SK-N-SH (cell line): ENCODE measurements at regions of chr19 and their contacts with region 1.

Region 1: GRCh38 chr19:34096020-34096915 is 76.0 kb upstream of the LSM14A start:
- DNase-seq: peak; percentile 72
- H3K4me3 ChIP-seq: peak overlapping the region; percentile 3 to 12; a peak in 2 of 4 replicates
- H3K27ac ChIP-seq: no peak overlapping the region
- H3K4me1 ChIP-seq: no peaks in the 10 kb centered on the region
- H3K27me3 ChIP-seq: no peaks in the 10 kb centered on the region
- CTCF ChIP-seq: peak; percentile 74
- EP300 ChIP-seq: no peak
- RAD21 ChIP-seq: peak; percentile 91

Region 2: DNA sequence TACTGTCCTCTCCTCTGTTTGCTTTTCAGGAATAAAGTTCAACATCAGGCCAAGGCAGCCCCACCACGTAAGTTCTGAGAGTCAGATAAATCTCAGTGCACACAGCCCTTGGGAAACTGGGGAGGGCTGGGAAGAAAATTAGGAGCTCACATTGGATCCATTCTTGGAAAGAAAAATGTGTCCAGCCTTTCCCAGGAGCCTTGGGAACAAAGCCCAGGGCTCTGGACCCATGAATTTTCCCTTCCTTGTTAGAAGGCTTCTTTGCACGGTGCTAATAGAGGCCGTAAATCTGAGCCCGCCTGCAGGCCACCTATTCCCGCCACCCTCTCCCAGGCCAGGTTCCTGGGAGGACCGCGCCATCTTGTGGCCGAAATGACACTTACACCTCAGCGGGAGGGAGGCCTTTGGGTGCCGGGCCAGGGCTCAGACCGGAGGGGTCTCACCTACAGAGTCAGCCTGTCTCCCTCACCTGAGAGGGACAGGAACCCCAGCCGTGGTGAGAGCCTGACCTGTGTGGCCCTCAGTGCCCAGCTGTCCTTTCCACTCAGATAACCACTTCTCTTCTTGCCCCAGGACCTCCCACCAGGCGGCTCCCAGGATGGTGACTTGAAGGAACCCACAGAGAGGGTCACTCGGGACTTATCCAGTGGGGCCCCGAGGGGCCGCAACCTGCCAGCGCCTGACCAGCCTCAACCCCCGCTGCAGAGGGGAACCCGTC is 324.7 kb before region 1 on chr19:
- CTCF ChIA-PET with region 1: interaction called, 336 read pairs
- POLR2A ChIA-PET with region 1: no interaction called
- DNase-seq: peak; percentile 92
- H3K4me3 ChIP-seq: no peak overlapping the region; a peak in 1 of 4 replicates
- H3K27ac ChIP-seq: no peak overlapping the region
- H3K4me1 ChIP-seq: peaks cover 0 to 32% of the 10 kb centered on the region in 2 experiments; a peak in 1 of 4 replicates
- H3K27me3 ChIP-seq: no peaks in the 10 kb centered on the region
- CTCF ChIP-seq: peak; percentile 79
- EP300 ChIP-seq: no peak
- RAD21 ChIP-seq: peak; percentile 98

Region 3: GRCh38 chr19:33998739-33999345 is 97.4 kb before region 1 on chr19:
- CTCF ChIA-PET with region 1: interaction called, 37 read pairs
- POLR2A ChIA-PET with region 1: no interaction called
- DNase-seq: peak; percentile 33
- H3K4me3 ChIP-seq: no peak overlapping the region
- H3K27ac ChIP-seq: no peak overlapping the region
- H3K4me1 ChIP-seq: no peaks in the 10 kb centered on the region; a peak in 1 of 4 replicates
- H3K27me3 ChIP-seq: no peaks in the 10 kb centered on the region
- CTCF ChIP-seq: peak; percentile 63
- EP300 ChIP-seq: no peak
- RAD21 ChIP-seq: peak; percentile 49

Region 4: DNA sequence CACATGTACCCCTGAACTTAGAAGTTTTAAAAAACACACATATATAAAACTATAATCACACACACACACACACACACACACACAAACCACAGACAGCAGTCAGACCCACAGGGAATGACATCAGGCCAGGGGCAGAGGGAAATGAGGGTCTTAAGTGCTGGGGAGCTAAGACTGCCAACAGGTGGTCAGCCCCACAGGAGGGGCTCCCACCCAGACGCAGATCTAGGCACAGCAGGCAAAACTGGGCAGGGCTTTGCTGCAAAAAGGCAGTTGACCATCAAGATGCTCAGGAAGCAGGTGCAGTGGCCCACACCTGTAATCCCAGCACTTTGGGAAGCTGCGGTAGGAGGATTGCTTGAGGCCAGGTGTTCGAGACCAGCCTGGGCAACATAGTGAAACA is 45.0 kb before region 1 on chr19:
- CTCF ChIA-PET with region 1: interaction called, 10 read pairs
- POLR2A ChIA-PET with region 1: no interaction called
- DNase-seq: no peak
- H3K4me3 ChIP-seq: no peak overlapping the region
- H3K27ac ChIP-seq: no peak overlapping the region
- H3K4me1 ChIP-seq: no peaks in the 10 kb centered on the region
- H3K27me3 ChIP-seq: no peaks in the 10 kb centered on the region
- CTCF ChIP-seq: no peak
- EP300 ChIP-seq: no peak
- RAD21 ChIP-seq: no peak

Region 5: DNA sequence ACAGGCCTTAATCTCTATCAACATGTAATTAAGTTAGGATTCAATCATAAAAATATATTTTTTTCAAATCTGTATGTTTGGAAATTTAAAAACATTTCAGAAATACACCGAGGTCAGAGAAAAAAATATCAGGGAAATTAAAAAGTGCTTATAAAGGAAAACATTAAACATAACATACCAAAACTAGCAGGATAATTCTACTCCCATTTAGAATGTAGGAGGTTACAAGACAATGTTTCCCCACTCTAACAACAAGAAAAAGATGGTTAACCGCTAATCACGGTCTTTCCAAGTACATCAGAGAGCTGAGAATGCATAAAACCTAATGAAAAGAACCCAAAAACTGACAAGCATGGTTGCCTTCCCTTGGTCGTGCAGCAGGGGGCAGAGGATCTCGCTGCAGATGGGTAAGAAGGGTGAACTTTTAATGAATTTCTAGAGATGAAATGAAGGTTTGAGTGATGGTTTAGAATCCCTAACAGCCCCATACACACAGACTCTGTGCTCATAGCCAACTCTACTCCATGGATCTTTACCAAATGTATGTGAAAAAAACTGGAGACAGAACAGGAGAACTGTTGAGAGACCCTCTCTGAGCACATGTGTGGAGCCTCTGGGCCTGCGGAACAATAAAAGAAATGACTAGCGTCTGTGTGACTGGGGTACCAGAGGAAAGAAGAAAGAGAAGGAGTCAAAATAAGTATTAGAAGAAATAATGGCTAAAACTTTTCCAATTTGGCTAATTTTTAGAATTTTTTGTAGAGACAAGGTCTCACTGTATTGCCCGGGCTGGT is 24.8 kb after region 1 on chr19:
- CTCF ChIA-PET with region 1: interaction called, 18 read pairs
- POLR2A ChIA-PET with region 1: no interaction called
- DNase-seq: peak; percentile 65
- H3K4me3 ChIP-seq: no peak overlapping the region; a peak in 1 of 4 replicates
- H3K27ac ChIP-seq: no peak overlapping the region
- H3K4me1 ChIP-seq: no peaks in the 10 kb centered on the region
- H3K27me3 ChIP-seq: no peaks in the 10 kb centered on the region; the same call in 1 of the 2 replicates
- CTCF ChIP-seq: peak; percentile 70
- EP300 ChIP-seq: no peak
- RAD21 ChIP-seq: peak; percentile 64